PC-9 (cell line): ENCODE measurements at regions of chr10 and their contacts with region 1.

Region 1: GRCh38 chr10:30359373-30360206 is 10.5 kb upstream of the MTPAP start:
- DNase-seq: peak; percentile 37 to 55
- H3K4me3 ChIP-seq: no peak overlapping the region
- H3K27ac ChIP-seq: no peak overlapping the region
- H3K4me1 ChIP-seq: peaks cover 3% of the 10 kb centered on the region; the same call in 1 of the 2 replicates
- H3K27me3 ChIP-seq: no peaks in the 10 kb centered on the region
- CTCF ChIP-seq: peak; percentile 83

Region 2: DNA sequence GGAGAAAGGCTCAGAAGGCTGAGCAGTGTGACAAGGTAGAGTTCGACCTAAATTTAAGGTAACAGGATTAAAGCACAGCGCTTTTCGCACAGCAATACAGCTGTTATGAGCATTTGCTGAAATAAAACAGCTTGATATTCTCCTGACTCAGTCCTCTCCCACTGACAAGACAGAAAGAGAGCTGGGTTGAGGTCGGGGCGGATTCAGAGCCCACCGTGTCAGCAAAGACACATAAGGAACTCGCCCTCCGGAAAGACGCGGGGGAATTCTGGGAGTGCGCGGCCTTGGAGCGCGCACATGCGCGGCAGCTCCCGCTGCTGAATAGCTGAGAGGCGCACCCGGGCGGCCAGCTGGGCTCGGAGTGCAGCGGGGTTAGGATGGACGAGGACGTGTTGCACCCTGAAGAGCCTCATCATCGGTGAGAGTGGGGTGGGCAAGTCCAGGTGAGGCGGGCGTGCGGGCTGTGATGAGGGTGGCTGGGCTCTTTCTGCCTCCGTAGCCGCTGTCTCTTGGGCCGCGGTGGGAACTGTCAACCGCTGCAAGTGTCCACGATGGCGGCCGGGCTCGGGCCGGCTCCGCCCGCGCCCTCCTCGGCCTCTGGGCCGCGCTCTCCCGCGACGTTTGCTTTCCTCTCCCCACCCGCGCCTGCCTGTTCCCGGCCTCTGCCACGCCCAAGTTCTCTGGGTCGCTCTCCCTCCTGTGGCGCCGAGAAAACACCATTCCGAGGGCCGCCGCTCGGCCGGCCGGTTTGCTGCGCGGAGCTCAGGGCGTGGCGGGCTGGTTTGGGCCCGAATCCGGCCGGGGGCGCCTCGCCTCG is 950.1 kb before region 1 on chr10:
- CTCF ChIA-PET with region 1: no interaction called
- POLR2A ChIA-PET with region 1: no interaction called
- intact Hi-C with region 1: no loop called
- DNase-seq: peak in 1 of 2 experiments; percentile 58
- H3K4me3 ChIP-seq: peak overlapping the region; percentile 75
- H3K27ac ChIP-seq: peak overlapping the region; percentile 34; the same call in 1 of the 2 replicates
- H3K4me1 ChIP-seq: peaks cover 4% of the 10 kb centered on the region; the same call in 1 of the 2 replicates
- H3K27me3 ChIP-seq: no peaks in the 10 kb centered on the region
- CTCF ChIP-seq: no peak

Region 3: DNA sequence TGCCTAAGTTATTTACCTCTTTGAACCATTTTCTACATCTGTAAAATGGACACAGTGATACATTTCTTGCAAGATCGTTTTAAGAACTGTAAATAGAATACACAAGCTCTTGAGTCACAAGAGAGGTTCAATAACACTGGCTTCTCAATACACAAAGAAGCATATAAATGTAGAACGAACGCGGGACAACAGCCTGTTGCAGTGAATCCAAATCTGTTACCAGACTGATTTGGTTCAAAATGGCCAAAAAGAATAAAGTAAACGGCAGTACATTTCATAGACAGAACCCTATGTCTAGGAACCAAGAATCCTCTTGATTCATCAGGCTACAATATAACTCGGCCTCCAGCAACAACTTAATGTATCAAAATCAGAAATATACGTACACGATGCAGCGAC is 11.2 kb before region 1 on chr10:
- CTCF ChIA-PET with region 1: interaction called, 10 read pairs
- POLR2A ChIA-PET with region 1: interaction called, 5 read pairs
- intact Hi-C with region 1: no loop called
- DNase-seq: no peak
- H3K4me3 ChIP-seq: peak overlapping the region; percentile 78
- H3K27ac ChIP-seq: peak overlapping the region; percentile 70
- H3K4me1 ChIP-seq: peaks cover 8% of the 10 kb centered on the region
- H3K27me3 ChIP-seq: no peaks in the 10 kb centered on the region
- CTCF ChIP-seq: no peak